ENCODE measurements at regions of chr11 and their contacts with region 1.

Region 1: GRCh38 chr11:59135648-59136461 is 6.8 kb upstream of the FAM111A start:
- DNase-seq: peak; percentile 79 to 89 (median 83)
- H3K4me3 ChIP-seq: no peak overlapping the region
- H3K4me3 Mint-ChIP-seq: peak overlapping the region in 4 of 7 donors; percentile 0 to 68 (median 52)
- H3K27ac ChIP-seq: no peak overlapping the region
- H3K27ac Mint-ChIP-seq: peak overlapping the region in 5 of 8 donors; percentile 43 to 94 (median 81)
- H3K4me1 ChIP-seq: peaks cover 4% of the 10 kb centered on the region
- H3K4me1 Mint-ChIP-seq: peaks cover 7 to 13% (median 10%) of the 10 kb centered on the region in 3 donors
- H3K27me3 ChIP-seq: no peaks in the 10 kb centered on the region
- H3K27me3 Mint-ChIP-seq: no peaks in the 10 kb centered on the region

Region 2: DNA sequence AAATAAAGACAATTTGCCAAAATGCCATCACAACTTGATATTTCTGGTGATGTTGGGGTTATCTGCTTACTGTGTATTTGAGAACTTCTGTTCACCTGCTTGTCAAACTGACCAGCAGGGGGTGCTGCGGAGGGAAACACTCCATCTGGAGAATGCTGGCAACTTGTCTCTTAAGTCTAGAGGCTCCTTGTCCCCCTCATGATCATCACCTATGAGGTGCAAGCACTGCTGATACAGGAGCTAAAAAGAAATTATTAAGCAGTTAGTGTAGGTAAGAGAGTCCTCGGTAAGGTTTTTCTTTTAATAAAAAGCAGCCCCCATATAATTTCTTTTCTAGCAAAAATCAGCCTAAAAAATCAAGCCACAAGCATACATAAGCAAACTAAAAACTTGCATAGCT is 82.5 kb before region 1 on chr11:
- CTCF ChIA-PET with region 1: interaction called, 21 read pairs
- POLR2A ChIA-PET with region 1: no interaction called
- DNase-seq: peak; percentile 61 to 82 (median 73)
- H3K4me3 ChIP-seq: no peak overlapping the region
- H3K4me3 Mint-ChIP-seq: no peak overlapping the region
- H3K27ac ChIP-seq: no peak overlapping the region
- H3K27ac Mint-ChIP-seq: no peak overlapping the region
- H3K4me1 ChIP-seq: no peaks in the 10 kb centered on the region
- H3K4me1 Mint-ChIP-seq: peaks cover 6 to 8% (median 6%) of the 10 kb centered on the region in 3 donors
- H3K27me3 ChIP-seq: no peaks in the 10 kb centered on the region
- H3K27me3 Mint-ChIP-seq: peaks cover 9 to 39% of the 10 kb centered on the region in 2 donors

Region 3: DNA sequence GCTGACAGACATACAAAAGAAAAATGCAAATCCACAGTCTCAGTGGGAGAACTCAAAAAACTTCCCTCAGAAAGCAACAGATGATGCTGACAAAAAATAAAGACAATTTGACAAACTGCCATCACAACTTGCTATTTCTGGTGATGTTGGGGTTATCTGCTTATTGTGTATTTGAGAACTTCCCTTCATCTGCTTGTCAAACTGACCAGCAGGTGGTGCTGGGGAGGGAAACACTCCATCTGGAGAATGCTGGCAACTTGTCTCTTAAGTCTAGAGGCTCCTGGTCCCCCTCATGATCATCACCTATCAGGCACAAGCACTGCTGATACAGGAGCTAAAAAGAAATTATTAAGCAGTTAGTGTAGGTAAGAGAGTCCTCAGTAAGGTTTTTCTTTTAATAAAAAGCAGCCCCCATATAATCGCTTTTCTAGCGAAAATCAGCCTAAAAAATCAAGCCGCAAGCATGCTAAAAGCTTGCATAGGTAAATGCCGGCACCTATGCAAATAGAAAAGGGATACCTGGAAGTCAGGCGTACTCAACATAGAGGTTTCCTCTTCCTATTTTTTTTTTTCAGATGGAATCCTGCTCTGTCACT is 38.6 kb before region 1 on chr11:
- CTCF ChIA-PET with region 1: interaction called, 23 read pairs
- POLR2A ChIA-PET with region 1: no interaction called
- DNase-seq: peak; percentile 50 to 77 (median 57)
- H3K4me3 ChIP-seq: no peak overlapping the region
- H3K4me3 Mint-ChIP-seq: no peak overlapping the region
- H3K27ac ChIP-seq: no peak overlapping the region
- H3K27ac Mint-ChIP-seq: no peak overlapping the region
- H3K4me1 ChIP-seq: no peaks in the 10 kb centered on the region
- H3K4me1 Mint-ChIP-seq: peaks cover 9% of the 10 kb centered on the region in 3 donors
- H3K27me3 ChIP-seq: no peaks in the 10 kb centered on the region
- H3K27me3 Mint-ChIP-seq: peaks cover 29 to 50% of the 10 kb centered on the region in 2 donors

Region 4: DNA sequence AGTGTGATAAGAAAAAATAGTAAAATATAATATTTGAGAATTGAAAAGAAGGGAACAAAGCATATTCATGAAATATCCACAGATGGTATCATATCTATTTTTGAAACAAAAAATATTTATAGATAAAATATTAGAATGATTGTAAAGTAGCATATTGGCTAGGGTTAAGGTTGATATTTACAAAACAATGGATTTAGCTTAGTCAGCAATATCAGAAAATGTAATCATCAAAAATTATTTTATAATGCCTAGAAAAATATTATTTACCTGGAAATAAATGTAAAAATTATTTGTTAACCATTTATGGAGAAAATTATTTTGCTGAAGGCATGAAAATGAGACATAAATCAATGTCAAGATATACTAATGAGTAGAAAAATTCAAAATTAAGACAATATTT is 16.0 kb before region 1 on chr11:
- CTCF ChIA-PET with region 1: interaction called, 10 read pairs
- POLR2A ChIA-PET with region 1: no interaction called
- DNase-seq: no peak
- H3K4me3 ChIP-seq: no peak overlapping the region
- H3K4me3 Mint-ChIP-seq: no peak overlapping the region
- H3K27ac ChIP-seq: no peak overlapping the region
- H3K27ac Mint-ChIP-seq: no peak overlapping the region
- H3K4me1 ChIP-seq: no peaks in the 10 kb centered on the region
- H3K4me1 Mint-ChIP-seq: no peaks in the 10 kb centered on the region
- H3K27me3 ChIP-seq: no peaks in the 10 kb centered on the region
- H3K27me3 Mint-ChIP-seq: peaks cover 0 to 1% of the 10 kb centered on the region in 2 donors

Region 5: DNA sequence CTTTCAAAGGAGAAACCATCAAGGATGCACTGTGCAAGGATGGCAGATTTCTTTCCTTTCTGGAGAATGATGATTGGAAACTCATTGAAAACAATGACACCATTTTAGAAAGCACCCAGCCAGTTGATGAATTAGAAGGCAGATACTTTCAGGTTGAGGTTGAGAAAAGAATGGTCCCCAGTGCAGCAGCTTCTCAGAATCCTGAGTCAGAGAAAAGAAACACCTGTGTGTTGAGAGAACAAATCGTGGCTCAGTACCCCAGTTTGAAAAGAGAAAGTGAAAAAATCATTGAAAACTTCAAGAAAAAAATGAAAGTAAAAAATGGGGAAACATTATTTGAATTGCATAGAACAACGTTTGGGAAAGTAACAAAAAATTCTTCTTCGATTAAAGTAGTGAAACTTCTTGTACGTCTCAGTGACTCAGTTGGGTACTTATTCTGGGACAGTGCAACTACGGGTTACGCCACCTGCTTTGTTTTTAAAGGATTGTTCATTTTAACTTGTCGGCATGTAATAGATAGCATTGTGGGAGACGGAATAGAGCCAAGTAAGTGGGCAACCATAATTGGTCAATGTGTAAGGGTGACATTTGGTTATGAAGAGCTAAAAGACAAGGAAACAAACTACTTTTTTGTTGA is 16.6 kb after region 1 on chr11:
- CTCF ChIA-PET with region 1: interaction called, 33 read pairs
- POLR2A ChIA-PET with region 1: no interaction called
- DNase-seq: no peak
- H3K4me3 ChIP-seq: no peak overlapping the region
- H3K4me3 Mint-ChIP-seq: peak overlapping the region in 6 of 7 donors; percentile 29 to 65 (median 44)
- H3K27ac ChIP-seq: no peak overlapping the region
- H3K27ac Mint-ChIP-seq: peak overlapping the region; percentile 5 to 89 (median 48)
- H3K4me1 ChIP-seq: peaks cover 4% of the 10 kb centered on the region
- H3K4me1 Mint-ChIP-seq: peaks cover 14 to 47% (median 39%) of the 10 kb centered on the region in 3 donors
- H3K27me3 ChIP-seq: no peaks in the 10 kb centered on the region
- H3K27me3 Mint-ChIP-seq: no peaks in the 10 kb centered on the region

Region 6: DNA sequence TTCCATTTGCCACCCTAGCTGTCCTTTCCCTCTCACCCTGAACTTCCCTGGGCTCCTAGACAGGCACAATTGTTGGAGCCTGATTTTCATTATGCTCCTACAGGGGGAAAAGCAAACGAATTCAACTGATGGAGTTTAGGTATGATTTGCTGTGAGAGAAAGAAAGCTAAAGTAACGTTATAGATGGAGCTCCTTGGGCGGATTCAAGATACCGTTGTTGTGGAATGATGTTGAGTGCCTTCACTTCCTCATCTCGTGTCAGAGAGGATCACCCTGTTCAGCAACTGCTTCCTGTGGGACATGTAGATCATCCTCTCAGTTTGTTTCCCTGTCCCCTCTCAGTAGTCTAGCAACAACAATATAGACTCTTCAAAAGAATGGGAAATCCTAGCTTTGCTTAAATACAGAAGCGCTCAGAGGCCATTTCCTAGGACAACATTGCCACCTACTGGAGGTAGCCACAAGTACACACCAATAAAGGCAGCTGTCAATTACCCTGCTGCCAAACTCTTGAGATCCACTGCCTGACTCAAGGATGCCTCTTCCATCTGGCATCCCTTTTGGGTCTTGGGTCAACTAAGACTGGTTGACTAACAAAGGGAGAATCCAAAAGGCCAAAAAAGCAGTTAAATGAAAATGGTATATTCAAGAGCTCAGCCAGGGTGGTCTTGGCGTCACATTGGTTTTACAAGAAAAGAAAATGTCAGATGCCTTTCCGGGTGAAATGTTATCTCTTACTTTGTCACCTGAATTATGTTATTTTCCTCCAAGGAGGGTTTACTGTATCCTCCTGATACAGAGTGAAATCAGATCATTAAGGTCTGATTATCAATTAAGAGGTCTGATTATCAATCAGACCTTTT is 22.6 kb after region 1 on chr11:
- CTCF ChIA-PET with region 1: interaction called, 33 read pairs
- POLR2A ChIA-PET with region 1: no interaction called
- DNase-seq: peak; percentile 27 to 74 (median 60)
- H3K4me3 ChIP-seq: no peak overlapping the region
- H3K4me3 Mint-ChIP-seq: no peak overlapping the region
- H3K27ac ChIP-seq: no peak overlapping the region
- H3K27ac Mint-ChIP-seq: peak overlapping the region in 4 of 8 donors; percentile 21 to 77 (median 68)
- H3K4me1 ChIP-seq: no peaks in the 10 kb centered on the region
- H3K4me1 Mint-ChIP-seq: peaks cover 2 to 5% (median 5%) of the 10 kb centered on the region in 3 donors
- H3K27me3 ChIP-seq: peaks cover 3% of the 10 kb centered on the region
- H3K27me3 Mint-ChIP-seq: peaks cover 4 to 18% of the 10 kb centered on the region in 2 donors

Measured in CD8-positive, alpha-beta memory T cell (primary cell).